ENCODE measurements at regions of chr11 and their contacts with region 1.

Region 1: DNA sequence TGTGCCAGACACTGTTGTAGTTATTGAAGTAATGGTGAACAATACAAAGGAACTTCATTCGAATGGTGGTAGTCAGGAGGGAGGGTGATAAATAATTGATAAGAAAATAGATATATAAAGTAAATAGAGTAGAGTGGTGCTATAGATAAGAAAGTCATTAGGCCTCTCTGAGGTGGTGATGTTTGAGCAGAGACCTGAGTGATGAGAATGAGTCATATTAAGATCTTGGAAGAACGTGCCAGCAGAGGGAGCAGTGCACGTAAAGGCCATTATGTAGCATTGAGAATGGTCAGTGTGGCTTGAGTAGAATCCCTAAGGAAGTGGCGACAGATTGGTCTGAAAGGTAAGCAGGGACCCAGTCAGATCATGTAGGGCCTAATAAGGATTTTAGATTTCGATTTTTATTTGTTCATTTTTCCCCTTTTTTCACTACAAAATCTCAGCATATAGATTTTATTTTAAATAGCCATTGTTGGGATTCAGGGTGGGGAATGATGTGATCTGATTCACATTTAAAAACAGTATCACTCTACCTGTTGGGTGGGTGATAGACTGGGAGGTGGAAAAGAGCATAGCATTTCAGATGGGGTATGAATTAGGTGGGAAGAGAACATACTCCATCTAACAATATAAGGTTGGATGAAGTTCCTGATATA is 44.7 kb downstream of the CCDC90B start:
- DNase-seq: peak; percentile 86
- ATAC-seq: peak; percentile 100
- H3K4me3 ChIP-seq: no peak overlapping the region
- H3K27ac ChIP-seq: no peak overlapping the region
- H3K4me1 ChIP-seq: no peaks in the 10 kb centered on the region
- H3K27me3 ChIP-seq: no peaks in the 10 kb centered on the region
- CTCF ChIP-seq: peak; percentile 85

Region 2: GRCh38 chr11:83174008-83174407 is 67.4 kb before region 1 on chr11:
- CTCF ChIA-PET with region 1: no interaction called
- POLR2A ChIA-PET with region 1: no interaction called
- intact Hi-C with region 1: no loop called
- DNase-seq: no peak
- ATAC-seq: no peak; the same call in 1 of the 2 replicates
- H3K4me3 ChIP-seq: no peak overlapping the region
- H3K27ac ChIP-seq: no peak overlapping the region
- H3K4me1 ChIP-seq: peaks cover 10% of the 10 kb centered on the region; the same call in 1 of the 2 replicates
- H3K27me3 ChIP-seq: no peaks in the 10 kb centered on the region
- CTCF ChIP-seq: no peak

Region 3: GRCh38 chr11:83257761-83258168 is 16.3 kb after region 1 on chr11:
- CTCF ChIA-PET with region 1: no interaction called
- POLR2A ChIA-PET with region 1: no interaction called
- intact Hi-C with region 1: loop called (anchors 1 kb)
- DNase-seq: peak; percentile 79
- ATAC-seq: peak; percentile 87
- H3K4me3 ChIP-seq: no peak overlapping the region
- H3K27ac ChIP-seq: no peak overlapping the region
- H3K4me1 ChIP-seq: peaks cover 34% of the 10 kb centered on the region
- H3K27me3 ChIP-seq: no peaks in the 10 kb centered on the region
- CTCF ChIP-seq: no peak

Region 4: GRCh38 chr11:83401506-83402225 is 160.2 kb after region 1 on chr11:
- CTCF ChIA-PET with region 1: no interaction called
- POLR2A ChIA-PET with region 1: no interaction called
- intact Hi-C with region 1: no loop called
- DNase-seq: no peak
- ATAC-seq: no peak
- H3K4me3 ChIP-seq: no peak overlapping the region
- H3K27ac ChIP-seq: no peak overlapping the region
- H3K4me1 ChIP-seq: no peaks in the 10 kb centered on the region
- H3K27me3 ChIP-seq: no peaks in the 10 kb centered on the region; the same call in 1 of the 2 replicates
- CTCF ChIP-seq: no peak

Region 5: DNA sequence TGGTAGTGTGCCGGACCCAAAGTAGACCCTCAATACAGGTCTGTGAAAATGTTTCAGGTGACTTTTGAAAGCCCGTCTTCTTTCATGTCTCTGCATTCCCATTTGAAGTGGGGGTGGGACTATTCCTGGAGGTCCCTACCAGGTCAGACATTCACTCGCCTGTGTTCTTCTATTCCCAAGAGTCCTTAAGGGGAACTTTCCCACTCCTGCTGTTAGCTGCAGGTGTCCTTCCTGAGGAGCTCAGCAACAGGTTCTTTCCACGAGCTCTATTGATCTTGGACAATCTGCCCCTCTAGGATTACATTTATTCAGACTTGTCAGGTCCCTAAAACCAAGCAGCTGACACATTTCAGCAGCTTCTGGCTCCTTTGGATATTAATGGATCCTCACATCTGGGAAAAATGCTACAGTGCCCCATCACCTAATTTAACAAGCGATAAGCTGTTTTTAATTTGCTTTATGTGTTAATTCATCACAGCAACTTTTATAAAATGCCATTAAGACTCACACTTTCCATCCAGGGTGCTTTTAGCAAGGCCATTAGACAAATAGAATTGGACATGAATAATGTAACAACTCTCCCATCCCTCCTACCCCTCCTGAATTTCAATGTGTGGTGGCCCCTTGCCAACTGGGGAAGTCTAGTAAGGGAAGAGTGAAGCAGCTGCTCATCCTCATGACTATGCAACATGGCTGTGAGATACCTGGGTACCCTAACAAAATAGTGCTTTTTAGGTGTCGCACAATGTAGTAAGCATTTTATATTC is 304.3 kb after region 1 on chr11:
- CTCF ChIA-PET with region 1: no interaction called
- POLR2A ChIA-PET with region 1: no interaction called
- intact Hi-C with region 1: no loop called
- DNase-seq: no peak
- ATAC-seq: no peak
- H3K4me3 ChIP-seq: no peak overlapping the region
- H3K27ac ChIP-seq: no peak overlapping the region
- H3K4me1 ChIP-seq: no peaks in the 10 kb centered on the region
- H3K27me3 ChIP-seq: peaks cover 13% of the 10 kb centered on the region
- CTCF ChIP-seq: no peak

Measured in PC-3 (cell line).